ENCODE measurements at regions of chr9 and their contacts with region 1.

Region 1: GRCh38 chr9:11735391-11735790 is 957.8 kb upstream of the TYRP1 start:
- DNase-seq: no peak

Region 2: GRCh38 chr9:10228082-10228481 is 1507.3 kb before region 1 on chr9:
- intact Hi-C with region 1: loop called in 1 of 2 experiments (anchors 5 kb)
- DNase-seq: no peak

Region 3: GRCh38 chr9:11709567-11709966 is 25.8 kb before region 1 on chr9:
- intact Hi-C with region 1: no loop called
- DNase-seq: no peak